Tibial artery (tissue), 4 donors: ENCODE measurements at regions of chr14 and their contacts with region 1.

Region 1: GRCh38 chr14:103910262-103910935 is 17.9 kb upstream of the TDRD9 start:
- DNase-seq: peak; percentile 55 to 82
- H3K4me3 ChIP-seq: no peak overlapping the region
- H3K27ac ChIP-seq: no peak overlapping the region
- H3K4me1 ChIP-seq: peaks cover 3 to 10% (median 7%) of the 10 kb centered on the region in 4 donors
- H3K27me3 ChIP-seq: peaks cover 0 to 3% of the 10 kb centered on the region in 2 donors
- CTCF ChIP-seq: peak; percentile 71

Region 2: DNA sequence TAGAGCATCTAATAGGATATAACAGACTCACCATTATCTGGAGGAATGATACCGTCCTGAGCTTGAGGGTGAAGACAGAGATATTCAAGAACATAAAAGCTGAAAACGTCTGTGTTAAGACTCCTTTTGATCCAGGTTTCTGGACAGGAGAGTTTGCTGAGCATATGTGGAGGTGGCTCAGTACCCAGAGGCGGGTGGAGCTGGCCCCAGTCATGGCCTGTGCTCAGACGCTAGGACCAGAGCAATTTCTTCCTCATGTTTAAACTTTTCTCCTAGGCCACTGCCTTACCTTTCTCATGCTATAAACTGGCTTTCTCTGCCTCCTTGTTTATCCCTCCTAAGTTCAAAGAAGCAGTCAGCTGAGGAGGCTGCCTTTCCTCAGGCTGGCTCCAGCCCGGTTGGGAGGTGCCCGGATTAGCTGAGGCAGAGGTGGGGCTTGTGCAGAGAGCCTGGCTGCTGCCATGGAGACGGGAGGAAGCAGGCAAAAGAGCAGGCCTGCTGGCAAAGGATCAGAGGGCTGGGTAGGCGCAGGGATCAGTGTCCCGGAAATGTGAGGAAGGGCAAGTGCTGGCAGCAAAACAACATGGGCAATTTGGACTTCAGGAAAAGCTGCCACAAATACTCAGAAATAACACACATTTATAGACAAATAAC is 333.9 kb before region 1 on chr14:
- intact Hi-C with region 1: loop called (anchors 5 kb)
- DNase-seq: peak; percentile 92 to 94
- H3K4me3 ChIP-seq: no peak overlapping the region
- H3K27ac ChIP-seq: peak overlapping the region; percentile 53 to 76
- H3K4me1 ChIP-seq: peaks cover 0 to 20% (median 18%) of the 10 kb centered on the region in 4 donors
- H3K27me3 ChIP-seq: no peaks in the 10 kb centered on the region
- CTCF ChIP-seq: no peak

Region 3: GRCh38 chr14:103811189-103811588 is 99.2 kb before region 1 on chr14:
- intact Hi-C with region 1: loop called (anchors 5 kb)
- DNase-seq: no peak
- H3K4me3 ChIP-seq: no peak overlapping the region
- H3K27ac ChIP-seq: no peak overlapping the region
- H3K4me1 ChIP-seq: peaks cover 0 to 1% (median 0%) of the 10 kb centered on the region in 4 donors
- H3K27me3 ChIP-seq: no peaks in the 10 kb centered on the region
- CTCF ChIP-seq: no peak